BJ (cell line): ENCODE measurements at regions of chr10 and their contacts with region 1.

Region 1: DNA sequence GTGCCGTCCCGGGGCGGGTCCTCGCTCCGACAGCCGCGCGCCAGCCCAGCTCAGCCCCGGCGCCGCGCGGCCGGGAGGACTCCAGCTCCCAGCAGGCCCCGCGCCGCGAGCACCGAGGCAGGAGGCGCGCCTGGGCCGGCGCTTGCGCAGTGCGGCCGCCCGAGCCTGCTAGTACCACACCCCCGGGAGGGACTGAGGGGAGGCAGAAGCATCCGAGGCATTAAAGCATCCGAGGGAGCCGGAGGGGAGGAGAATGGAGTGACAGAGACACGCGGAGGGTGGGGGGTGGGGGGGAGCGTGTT is at the start of gene GRK5:
- DNase-seq: peak; percentile 91
- H3K4me3 ChIP-seq: peak within 1 kb of the TSS; percentile 91
- H3K27me3 ChIP-seq: no peaks in the 10 kb centered on the region
- CTCF ChIP-seq: no peak
- polyA plus RNA-seq, gene GRK5: 14.7 and 20.8 TPM in 2 replicates

Region 2: GRCh38 chr10:119112056-119112455 is 95.3 kb before region 1 on chr10:
- CTCF ChIA-PET with region 1: interaction called, 4 read pairs
- POLR2A ChIA-PET with region 1: interaction called, 16 read pairs
- DNase-seq: peak; percentile 49
- H3K4me3 ChIP-seq: no peak overlapping the region
- H3K27me3 ChIP-seq: no peaks in the 10 kb centered on the region
- CTCF ChIP-seq: no peak

Region 3: DNA sequence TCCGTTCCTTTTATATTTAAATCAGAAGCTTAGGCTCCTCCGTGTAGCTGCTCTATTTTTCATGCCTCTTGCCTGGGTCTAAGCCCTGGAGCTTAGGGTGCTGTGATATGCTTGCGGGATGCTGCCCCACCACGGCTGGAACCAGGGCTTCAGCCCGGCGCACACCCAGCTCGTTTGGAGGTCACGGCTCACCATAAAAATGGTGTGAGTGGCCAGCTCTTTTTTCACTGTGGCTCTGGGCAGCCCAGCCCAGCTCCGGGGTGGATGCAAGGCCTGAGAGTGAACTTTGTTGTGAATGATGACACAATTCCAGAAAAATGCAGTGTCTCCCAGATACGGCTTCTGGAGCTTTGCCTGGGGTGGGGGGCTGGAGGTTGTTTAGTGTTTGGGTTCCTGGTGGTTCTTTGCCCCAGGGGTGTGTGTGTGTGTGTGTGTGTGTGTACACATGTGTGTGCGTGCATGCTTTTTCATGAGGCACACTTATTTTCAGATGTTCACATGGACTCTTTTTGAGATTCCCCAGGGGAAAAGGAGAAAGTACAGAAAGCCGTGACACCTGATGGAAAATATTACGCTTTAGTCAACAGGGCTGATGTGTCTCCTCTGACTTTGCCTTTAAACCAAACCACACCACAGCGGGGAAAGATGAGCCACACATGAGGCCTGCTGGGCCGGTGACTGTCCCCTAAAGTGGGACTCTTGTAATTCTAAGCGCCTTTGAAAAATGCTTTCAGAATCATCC is 46.3 kb after region 1 on chr10:
- CTCF ChIA-PET with region 1: interaction called, 42 read pairs
- POLR2A ChIA-PET with region 1: interaction called, 6 read pairs
- DNase-seq: peak; percentile 92
- H3K4me3 ChIP-seq: no peak overlapping the region
- H3K27me3 ChIP-seq: no peaks in the 10 kb centered on the region
- CTCF ChIP-seq: peak; percentile 47

Region 4: DNA sequence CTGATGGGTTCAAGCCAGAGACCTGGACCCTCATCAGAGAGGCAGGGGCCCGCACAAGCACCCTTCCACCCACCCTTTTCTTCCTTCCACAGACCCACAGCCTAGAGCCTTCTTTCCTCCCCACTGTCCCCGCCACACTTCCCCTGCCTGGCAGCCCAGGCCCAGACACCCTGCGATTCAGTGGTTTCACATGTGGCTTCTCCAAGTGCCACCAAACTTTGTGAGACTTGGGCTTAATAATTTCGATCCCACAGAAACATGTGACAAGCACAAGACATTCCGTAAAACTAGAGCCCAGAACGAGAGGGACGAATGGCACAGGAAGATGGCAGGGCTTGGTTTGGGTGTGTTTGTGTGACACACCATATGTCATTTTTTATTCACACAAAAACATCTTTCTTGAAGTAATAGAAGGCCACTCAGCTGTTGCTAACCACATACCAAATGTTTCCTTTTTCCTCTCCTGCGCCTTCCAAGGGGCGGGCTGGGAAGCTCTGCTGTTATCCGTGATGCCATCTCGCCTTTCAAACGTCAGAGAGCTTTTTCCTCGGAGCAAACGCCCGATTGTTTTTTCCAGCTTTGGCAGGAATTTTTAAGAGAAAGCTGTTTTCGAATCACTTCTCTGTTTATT is 162.9 kb after region 1 on chr10:
- CTCF ChIA-PET with region 1: interaction called, 16 read pairs
- POLR2A ChIA-PET with region 1: no interaction called
- DNase-seq: peak; percentile 87
- H3K4me3 ChIP-seq: peak overlapping the region; percentile 14; the same call in 1 of the 2 replicates
- H3K27me3 ChIP-seq: no peaks in the 10 kb centered on the region
- CTCF ChIP-seq: no peak

Region 5: GRCh38 chr10:119445311-119445934 is 238.1 kb after region 1 on chr10:
- CTCF ChIA-PET with region 1: interaction called, 143 read pairs
- POLR2A ChIA-PET with region 1: interaction called, 4 read pairs
- DNase-seq: no peak
- H3K4me3 ChIP-seq: no peak overlapping the region
- H3K27me3 ChIP-seq: no peaks in the 10 kb centered on the region
- CTCF ChIP-seq: peak; percentile 98